GM12878 (cell line): ENCODE measurements at regions of chr14 and their contacts with region 1.

Region 1: GRCh38 chr14:45134051-45134958 is at the start of gene FKBP3:
- DNase-seq: peak; percentile 91
- ATAC-seq: peak; percentile 92
- H3K4me3 ChIP-seq: peak within 1 kb of the TSS; percentile 93
- H3K27ac ChIP-seq: peak within 1 kb of the TSS; percentile 77
- H3K4me1 ChIP-seq: no peaks in the 10 kb centered on the region
- H3K27me3 ChIP-seq: no peaks in the 10 kb centered on the region
- CTCF ChIP-seq: peak; percentile 18 to 54 (median 32); a peak in 4 of 6 replicates
- EP300 ChIP-seq: no peak
- POLR2A ChIP-seq: peak; percentile 96
- RAD21 ChIP-seq: peak; percentile 49
- polyA plus RNA-seq, gene FKBP3: 148 to 169 TPM

Region 2: DNA sequence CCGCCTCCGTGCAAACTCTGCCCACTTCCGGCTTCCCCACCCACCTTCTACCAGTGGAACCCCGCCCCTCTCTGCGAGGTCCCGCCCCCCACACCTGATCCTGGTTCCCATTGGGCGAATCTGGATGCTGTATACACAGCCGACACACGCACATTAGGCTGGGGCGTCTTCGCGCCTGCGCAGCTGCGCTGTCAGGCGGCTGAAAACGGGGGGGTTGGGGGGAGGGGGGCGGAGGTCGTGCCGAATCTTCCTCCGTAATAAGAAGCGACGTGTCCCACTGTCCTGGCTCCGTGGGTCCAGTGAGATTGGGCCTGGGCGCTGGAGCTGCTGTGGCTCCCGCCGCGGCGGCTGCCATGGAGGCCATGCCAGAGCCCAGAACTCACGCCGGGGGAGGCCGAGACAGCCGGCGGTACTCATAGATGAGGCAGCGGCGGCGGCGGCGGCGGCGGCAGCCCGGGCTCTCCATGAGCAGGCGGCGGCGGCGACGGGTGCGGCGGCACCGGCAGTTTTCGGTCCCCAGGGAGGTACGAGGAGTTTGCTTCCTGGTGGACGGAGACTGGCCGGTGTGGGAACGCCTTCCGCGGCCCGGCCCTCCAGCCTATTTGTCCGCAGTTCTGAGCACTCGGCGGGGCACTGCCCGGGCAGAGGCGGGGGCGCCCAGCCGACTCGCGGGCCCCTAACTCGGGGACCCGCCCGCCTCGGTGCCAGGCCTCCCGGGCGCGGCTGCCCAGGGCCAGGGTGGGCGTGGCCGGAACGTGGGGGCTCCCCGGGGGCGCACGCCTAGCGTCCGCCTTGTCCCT is 237.1 kb before region 1 on chr14:
- CTCF ChIA-PET with region 1: no interaction called
- POLR2A ChIA-PET with region 1: no interaction called
- RAD21 ChIA-PET with region 1: no interaction called
- SMC1A ChIA-PET with region 1: interaction called, 3 read pairs
- in situ Hi-C with region 1: no loop called
- intact Hi-C with region 1: loop called (anchors 1 kb)
- DNase-seq: peak; percentile 89
- ATAC-seq: peak; percentile 97
- H3K4me3 ChIP-seq: peak overlapping the region; percentile 69
- H3K27ac ChIP-seq: peak overlapping the region; percentile 79
- H3K4me1 ChIP-seq: no peaks in the 10 kb centered on the region
- H3K27me3 ChIP-seq: no peaks in the 10 kb centered on the region
- CTCF ChIP-seq: no peak
- EP300 ChIP-seq: no peak
- POLR2A ChIP-seq: peak; percentile 83
- RAD21 ChIP-seq: no peak

Region 3: GRCh38 chr14:44961604-44962333 is 172.5 kb before region 1 on chr14 and contains the starts of genes KLHL28 and TOGARAM1:
- CTCF ChIA-PET with region 1: interaction called, 13 read pairs
- POLR2A ChIA-PET with region 1: interaction called, 7 read pairs
- RAD21 ChIA-PET with region 1: interaction called, 6 read pairs
- SMC1A ChIA-PET with region 1: interaction called, 6 read pairs
- in situ Hi-C with region 1: loop called (anchors 5 kb)
- intact Hi-C with region 1: loop called (anchors 1 kb)
- DNase-seq: peak; percentile 100
- ATAC-seq: peak; percentile 85
- H3K4me3 ChIP-seq: peak within 1 kb of the TSS; percentile 95
- H3K27ac ChIP-seq: peak within 1 kb of the TSS; percentile 78
- H3K4me1 ChIP-seq: no peaks in the 10 kb centered on the region
- H3K27me3 ChIP-seq: no peaks in the 10 kb centered on the region
- CTCF ChIP-seq: no peak
- EP300 ChIP-seq: peak in 1 of 2 experiments; percentile 63; a peak in 1 of 4 replicates
- POLR2A ChIP-seq: peak; percentile 93
- RAD21 ChIP-seq: no peak
- polyA plus RNA-seq, gene KLHL28: 4.3 to 9.3 TPM
- polyA plus RNA-seq, gene TOGARAM1: 2.1 to 2.6 TPM

Region 4: GRCh38 chr14:45144658-45145057 is 10.4 kb after region 1 on chr14:
- CTCF ChIA-PET with region 1: interaction called, 3 read pairs
- POLR2A ChIA-PET with region 1: interaction called, 12 read pairs
- RAD21 ChIA-PET with region 1: interaction called, 3 read pairs
- SMC1A ChIA-PET with region 1: interaction called, 6 read pairs
- in situ Hi-C with region 1: no loop called
- intact Hi-C with region 1: no loop called
- DNase-seq: no peak
- ATAC-seq: peak; percentile 70
- H3K4me3 ChIP-seq: no peak overlapping the region
- H3K27ac ChIP-seq: peak overlapping the region; percentile 61
- H3K4me1 ChIP-seq: peaks cover 13% of the 10 kb centered on the region
- H3K27me3 ChIP-seq: no peaks in the 10 kb centered on the region
- CTCF ChIP-seq: no peak
- EP300 ChIP-seq: no peak
- POLR2A ChIP-seq: no peak
- RAD21 ChIP-seq: no peak

Region 5: GRCh38 chr14:45267071-45267470 is 132.8 kb after region 1 on chr14:
- CTCF ChIA-PET with region 1: interaction called, 8 read pairs
- POLR2A ChIA-PET with region 1: interaction called, 5 read pairs
- RAD21 ChIA-PET with region 1: interaction called, 4 read pairs
- SMC1A ChIA-PET with region 1: no interaction called
- in situ Hi-C with region 1: no loop called
- intact Hi-C with region 1: loop called (anchors 5 kb)
- DNase-seq: no peak
- ATAC-seq: no peak
- H3K4me3 ChIP-seq: no peak overlapping the region
- H3K27ac ChIP-seq: no peak overlapping the region
- H3K4me1 ChIP-seq: no peaks in the 10 kb centered on the region
- H3K27me3 ChIP-seq: no peaks in the 10 kb centered on the region
- CTCF ChIP-seq: no peak
- EP300 ChIP-seq: no peak
- POLR2A ChIP-seq: no peak
- RAD21 ChIP-seq: no peak

Region 6: GRCh38 chr14:45610318-45610717 is 476.0 kb after region 1 on chr14:
- CTCF ChIA-PET with region 1: no interaction called
- POLR2A ChIA-PET with region 1: no interaction called
- RAD21 ChIA-PET with region 1: no interaction called
- SMC1A ChIA-PET with region 1: no interaction called
- in situ Hi-C with region 1: no loop called
- intact Hi-C with region 1: no loop called
- DNase-seq: no peak
- ATAC-seq: no peak
- H3K4me3 ChIP-seq: no peak overlapping the region
- H3K27ac ChIP-seq: no peak overlapping the region
- H3K4me1 ChIP-seq: no peaks in the 10 kb centered on the region
- H3K27me3 ChIP-seq: no peaks in the 10 kb centered on the region
- CTCF ChIP-seq: peak in 1 of 3 experiments; percentile 7; a peak in 1 of 6 replicates
- EP300 ChIP-seq: no peak
- POLR2A ChIP-seq: no peak
- RAD21 ChIP-seq: peak; percentile 32; the same call in 1 of the 2 replicates